ENCODE measurements at regions of chr2 and their contacts with region 1.

Region 1: DNA sequence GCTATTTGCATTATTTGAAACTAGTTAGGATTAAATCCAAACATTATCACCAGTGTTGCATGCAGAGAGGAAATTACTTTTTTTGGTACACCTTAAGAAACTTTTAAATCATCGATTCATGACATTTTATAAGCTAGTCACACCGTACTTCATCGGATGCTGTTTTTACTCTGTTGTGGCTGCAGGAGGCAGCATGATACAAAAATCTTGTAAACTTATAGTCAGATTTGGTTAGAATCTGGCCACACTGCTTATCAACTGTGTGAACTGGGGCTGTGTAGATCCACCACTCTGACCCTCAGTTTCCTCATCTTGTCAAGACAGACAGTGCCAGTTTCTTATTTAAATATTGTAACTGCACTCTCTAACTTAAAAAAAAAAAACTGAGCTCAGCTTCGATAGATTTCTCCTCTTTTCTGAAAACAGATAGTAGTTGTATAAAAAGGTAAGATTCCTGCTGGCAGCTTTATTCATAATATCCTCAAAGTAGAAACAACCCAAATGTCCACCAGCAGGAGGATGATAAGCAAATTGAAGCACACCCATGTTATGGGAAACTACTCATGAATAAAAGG is 77.8 kb downstream of the RAPGEF4 start:
- DNase-seq: no peak
- H3K4me3 ChIP-seq: no peak overlapping the region
- CTCF ChIP-seq: no peak
- POLR2A ChIP-seq: no peak

Region 2: DNA sequence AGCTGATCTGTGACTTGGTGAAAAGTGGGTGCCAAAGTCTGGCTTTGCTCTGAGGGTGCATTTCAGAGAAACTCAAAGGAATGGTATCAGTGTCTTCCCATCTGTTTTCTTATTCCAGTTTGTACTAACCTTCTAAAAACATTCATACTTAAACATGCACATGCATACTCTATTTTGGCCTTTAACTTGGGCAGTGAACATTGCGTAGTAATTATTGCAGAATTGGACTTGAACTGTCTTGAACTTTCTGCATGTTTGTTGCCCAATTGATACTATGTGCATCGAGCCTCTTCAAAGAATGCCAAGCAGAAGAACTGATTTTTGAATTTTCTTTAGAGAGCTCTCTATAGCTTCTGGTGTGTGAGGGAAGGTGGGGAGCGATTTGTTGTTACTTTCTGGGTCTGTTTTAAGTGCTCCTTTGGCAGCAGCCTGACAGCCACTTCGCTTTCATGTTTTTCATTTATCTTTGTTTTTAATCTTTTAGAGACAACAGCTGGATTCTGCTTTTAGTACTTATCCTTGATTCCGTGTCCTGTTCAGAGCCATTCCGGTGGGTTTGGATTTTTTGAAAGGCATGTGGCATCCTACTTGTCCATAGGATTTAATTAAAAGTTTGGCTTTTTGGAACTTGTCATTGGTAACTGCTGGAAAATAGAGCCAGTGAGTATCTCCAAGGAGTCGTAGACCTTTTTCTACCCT is 81.4 kb after region 1 on chr2:
- intact Hi-C with region 1: no loop called
- DNase-seq: no peak
- H3K4me3 ChIP-seq: no peak overlapping the region
- CTCF ChIP-seq: no peak
- POLR2A ChIP-seq: no peak

Region 3: DNA sequence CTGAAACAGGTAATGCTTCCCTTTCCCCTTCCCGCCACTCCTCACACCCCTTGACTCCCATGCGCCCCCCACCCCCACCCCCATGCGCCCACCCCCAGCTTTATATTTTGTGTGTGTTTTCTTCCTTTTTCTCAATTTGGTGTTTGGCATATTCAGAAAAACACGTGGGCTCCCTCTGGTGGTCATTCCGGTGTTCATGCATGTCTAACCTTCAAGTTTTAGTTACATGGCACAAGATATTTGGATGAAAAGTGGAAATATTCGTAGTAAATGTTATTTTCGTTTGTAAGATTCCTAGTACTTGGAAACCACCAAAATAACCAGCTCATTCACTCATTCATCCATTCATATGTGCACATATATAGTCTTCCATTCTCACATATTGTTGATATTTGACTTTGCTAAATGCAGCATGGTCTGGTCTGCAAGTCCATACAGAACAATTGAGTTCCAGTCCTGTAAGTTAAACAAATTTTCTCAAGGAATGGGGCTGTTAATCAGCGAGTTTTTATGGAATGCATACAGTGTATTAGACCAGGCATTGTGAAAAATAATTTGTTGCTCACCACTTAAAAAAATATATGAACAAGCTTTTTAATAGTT is 118.6 kb after region 1 on chr2:
- intact Hi-C with region 1: loop called (anchors 2 kb)
- DNase-seq: peak in 1 of 2 donors; percentile 48
- H3K4me3 ChIP-seq: no peak overlapping the region
- CTCF ChIP-seq: no peak
- POLR2A ChIP-seq: no peak

Region 4: DNA sequence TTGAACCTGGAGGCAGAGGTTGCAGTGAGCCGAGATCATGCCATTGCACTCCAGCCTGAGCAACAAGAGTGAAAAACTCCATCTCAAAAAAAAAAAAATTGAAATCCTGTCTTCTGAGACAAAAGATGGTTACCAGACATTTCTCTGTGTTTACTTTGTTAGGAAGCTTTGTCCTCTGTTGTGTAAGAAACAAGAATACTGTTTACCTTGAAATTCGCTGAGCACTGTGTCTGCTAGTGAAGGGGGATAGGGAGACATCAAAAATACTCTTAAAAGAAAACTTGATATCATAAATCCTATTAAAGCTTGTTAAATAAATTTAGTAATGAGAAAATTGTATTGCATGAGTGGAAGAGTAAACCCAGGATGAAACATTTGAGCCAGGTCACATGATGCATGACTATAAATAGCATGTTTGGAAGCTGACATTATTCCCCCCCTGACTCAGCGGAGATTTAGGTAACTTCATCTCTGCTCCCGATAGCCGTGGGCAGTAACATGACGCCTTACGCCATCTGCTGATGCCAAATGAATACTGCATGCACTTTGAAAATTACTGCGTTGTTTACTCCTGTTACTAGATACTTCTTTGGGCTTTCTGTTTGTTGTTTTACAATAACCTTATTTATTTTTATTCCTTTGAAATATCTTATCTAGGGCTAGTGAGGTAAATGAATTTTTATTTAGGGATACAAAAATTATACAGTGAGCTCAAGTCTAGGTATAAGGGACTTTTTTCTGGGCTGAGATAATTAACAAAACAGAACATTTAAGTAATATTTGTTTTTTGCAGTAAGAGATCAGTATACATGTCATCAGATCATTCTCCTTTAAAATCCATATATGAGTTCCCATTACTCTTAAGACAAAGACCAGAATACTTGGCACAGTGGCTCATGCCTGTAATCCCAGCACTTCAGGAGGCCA is 397.1 kb after region 1 on chr2:
- intact Hi-C with region 1: loop called (anchors 10 kb)
- DNase-seq: peak in 1 of 2 donors; percentile 86
- H3K4me3 ChIP-seq: no peak overlapping the region
- CTCF ChIP-seq: peak in 1 of 3 donors; percentile 91
- POLR2A ChIP-seq: no peak

Region 5: GRCh38 chr2:173866874-173867618 is 1053.6 kb after region 1 on chr2:
- intact Hi-C with region 1: no loop called
- DNase-seq: peak in 1 of 2 donors; percentile 83
- H3K4me3 ChIP-seq: no peak overlapping the region
- CTCF ChIP-seq: no peak
- POLR2A ChIP-seq: no peak